PC-9 (cell line): ENCODE measurements at regions of chr14 and their contacts with region 1.

Region 1: GRCh38 chr14:103333754-103334643 is at the start of gene EIF5:
- DNase-seq: peak; percentile 98 to 100
- H3K4me3 ChIP-seq: peak within 1 kb of the TSS; percentile 88
- H3K27ac ChIP-seq: peak within 1 kb of the TSS; percentile 94
- H3K4me1 ChIP-seq: peaks cover 42% of the 10 kb centered on the region
- H3K27me3 ChIP-seq: no peaks in the 10 kb centered on the region
- CTCF ChIP-seq: no peak
- total RNA-seq, gene EIF5: 310 and 330 TPM in 2 replicates

Region 2: GRCh38 chr14:103110681-103111231 is 223.2 kb before region 1 on chr14:
- CTCF ChIA-PET with region 1: no interaction called
- POLR2A ChIA-PET with region 1: interaction called, 6 read pairs
- intact Hi-C with region 1: loop called (anchors 1 kb)
- DNase-seq: peak; percentile 93
- H3K4me3 ChIP-seq: peak overlapping the region; percentile 49; the same call in 1 of the 2 replicates
- H3K27ac ChIP-seq: peak overlapping the region; percentile 90
- H3K4me1 ChIP-seq: peaks cover 68% of the 10 kb centered on the region
- H3K27me3 ChIP-seq: no peaks in the 10 kb centered on the region
- CTCF ChIP-seq: no peak

Region 3: DNA sequence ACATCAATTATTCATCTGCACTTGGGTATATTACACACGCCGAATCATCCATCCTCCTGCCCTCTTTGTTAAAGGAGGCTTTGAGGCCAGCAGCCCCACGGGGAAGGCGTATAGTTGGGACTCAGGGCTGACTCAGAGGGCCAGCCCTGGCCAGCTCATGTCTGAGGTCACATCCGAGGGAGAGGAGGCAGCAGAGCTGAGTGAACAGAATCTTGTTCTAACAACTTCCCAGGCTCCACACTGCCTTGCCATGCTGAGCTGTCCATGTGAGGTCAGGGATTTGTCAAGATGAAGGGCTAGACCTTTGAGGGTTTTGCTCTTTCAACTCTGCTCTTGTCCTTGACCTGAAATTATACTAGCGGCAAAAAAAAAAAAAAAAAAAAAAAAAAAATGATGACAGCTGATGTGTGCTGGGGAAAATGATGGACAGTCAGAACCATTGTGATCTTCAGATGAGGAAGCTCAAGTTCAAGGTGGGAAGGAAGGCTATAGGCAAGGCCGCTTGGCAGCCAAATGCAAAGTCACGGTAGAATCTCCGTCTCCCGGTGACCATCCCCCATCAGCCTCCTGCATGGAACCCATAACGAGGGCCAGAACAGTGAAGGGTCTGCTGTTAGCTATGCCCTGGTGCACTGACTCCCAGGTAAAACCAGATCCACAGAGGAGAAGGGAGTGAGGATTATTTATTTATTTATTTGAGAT is 38.8 kb after region 1 on chr14:
- CTCF ChIA-PET with region 1: interaction called, 16 read pairs
- POLR2A ChIA-PET with region 1: interaction called, 6 read pairs
- intact Hi-C with region 1: no loop called
- DNase-seq: peak; percentile 87 to 96
- H3K4me3 ChIP-seq: no peak overlapping the region
- H3K27ac ChIP-seq: peak overlapping the region; percentile 63
- H3K4me1 ChIP-seq: peaks cover 27% of the 10 kb centered on the region
- H3K27me3 ChIP-seq: no peaks in the 10 kb centered on the region
- CTCF ChIP-seq: no peak

Region 4: DNA sequence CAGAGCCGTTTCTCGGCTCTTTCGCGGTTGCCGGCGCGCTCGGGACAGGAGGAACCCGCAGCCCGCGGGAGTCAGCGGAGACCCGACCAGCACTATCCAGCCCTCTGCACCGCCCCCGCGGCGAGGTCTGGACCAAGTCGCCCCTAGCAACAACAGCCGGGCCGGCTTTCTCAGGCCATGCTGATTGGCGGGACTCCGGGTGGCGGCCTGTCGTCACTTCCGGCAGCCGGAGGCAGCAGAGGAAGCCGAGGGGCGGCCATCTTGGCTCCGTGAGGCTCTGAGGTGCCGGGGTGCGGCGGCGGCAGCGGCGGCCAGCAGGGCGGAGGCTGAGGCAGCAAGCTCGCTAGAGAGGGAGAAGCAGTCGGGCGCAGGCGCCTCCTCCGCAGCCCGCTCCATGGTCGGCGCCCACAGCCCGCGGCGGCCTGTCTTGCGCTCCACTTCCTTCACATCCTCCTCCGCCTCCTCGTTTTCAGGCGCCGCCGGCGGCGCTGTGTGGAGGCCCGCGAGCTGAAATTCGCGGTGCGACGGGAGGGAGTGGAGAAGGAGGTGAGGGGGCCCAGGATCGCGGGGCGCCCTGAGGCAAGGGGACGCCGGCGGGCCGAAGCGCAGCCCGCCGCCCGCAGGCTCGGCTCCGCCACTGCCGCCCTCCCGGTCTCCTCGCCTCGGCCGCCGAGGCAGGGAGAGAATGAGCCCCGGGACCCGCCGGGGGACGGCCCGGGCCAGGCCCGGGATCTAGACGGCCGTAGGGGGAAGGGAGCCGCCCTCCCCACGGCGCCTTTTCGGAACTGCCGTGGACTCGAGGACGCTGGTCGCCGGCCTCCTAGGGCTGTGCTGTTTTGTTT is 51.4 kb after region 1 on chr14 and contains the start of gene MARK3:
- CTCF ChIA-PET with region 1: interaction called, 6 read pairs
- POLR2A ChIA-PET with region 1: no interaction called
- intact Hi-C with region 1: loop called (anchors 2 kb)
- DNase-seq: peak; percentile 98 to 100
- H3K4me3 ChIP-seq: peak within 1 kb of the TSS; percentile 72
- H3K27ac ChIP-seq: peak within 1 kb of the TSS; percentile 66
- H3K4me1 ChIP-seq: peaks cover 32% of the 10 kb centered on the region
- H3K27me3 ChIP-seq: no peaks in the 10 kb centered on the region
- CTCF ChIP-seq: peak; percentile 53; the same call in 1 of the 2 replicates
- total RNA-seq, gene MARK3: 189 and 191 TPM in 2 replicates

Region 5: GRCh38 chr14:103391048-103391447 is 57.0 kb after region 1 on chr14:
- CTCF ChIA-PET with region 1: interaction called, 10 read pairs
- POLR2A ChIA-PET with region 1: no interaction called
- intact Hi-C with region 1: no loop called
- DNase-seq: peak; percentile 45 to 72
- H3K4me3 ChIP-seq: no peak overlapping the region
- H3K27ac ChIP-seq: no peak overlapping the region
- H3K4me1 ChIP-seq: peaks cover 57% of the 10 kb centered on the region
- H3K27me3 ChIP-seq: no peaks in the 10 kb centered on the region
- CTCF ChIP-seq: peak; percentile 97